OCI-LY7 (cell line): ENCODE measurements at regions of chr4 and their contacts with region 1.

Region 1: GRCh38 chr4:37686373-37687193 is at the start of gene RELL1:
- DNase-seq: peak; percentile 97
- H3K4me3 ChIP-seq: peak within 1 kb of the TSS; percentile 78
- H3K27ac ChIP-seq: peak within 1 kb of the TSS; percentile 75
- H3K4me1 ChIP-seq: peaks cover 40% of the 10 kb centered on the region
- CTCF ChIP-seq: no peak
- total RNA-seq, gene RELL1: 60.7 and 62.3 TPM in 2 replicates

Region 2: GRCh38 chr4:37603070-37603468 is 83.5 kb before region 1 on chr4:
- CTCF ChIA-PET with region 1: no interaction called
- POLR2A ChIA-PET with region 1: no interaction called
- intact Hi-C with region 1: loop called (anchors 1 kb)
- DNase-seq: peak; percentile 60
- H3K4me3 ChIP-seq: no peak overlapping the region
- H3K27ac ChIP-seq: no peak overlapping the region
- H3K4me1 ChIP-seq: no peaks in the 10 kb centered on the region
- CTCF ChIP-seq: peak; percentile 99

Region 3: GRCh38 chr4:37675587-37676290 is 10.8 kb before region 1 on chr4:
- CTCF ChIA-PET with region 1: no interaction called
- POLR2A ChIA-PET with region 1: interaction called, 7 read pairs
- intact Hi-C with region 1: loop called (anchors 1 kb)
- DNase-seq: peak; percentile 95
- H3K4me3 ChIP-seq: peak overlapping the region; percentile 53
- H3K27ac ChIP-seq: peak overlapping the region; percentile 94
- H3K4me1 ChIP-seq: peaks cover 74% of the 10 kb centered on the region
- CTCF ChIP-seq: no peak

Region 4: GRCh38 chr4:37749398-37749988 is 62.9 kb after region 1 on chr4:
- CTCF ChIA-PET with region 1: no interaction called
- POLR2A ChIA-PET with region 1: interaction called, 4 read pairs
- intact Hi-C with region 1: loop called (anchors 2 kb)
- DNase-seq: peak; percentile 48
- H3K4me3 ChIP-seq: no peak overlapping the region
- H3K27ac ChIP-seq: peak overlapping the region; percentile 27
- H3K4me1 ChIP-seq: peaks cover 24% of the 10 kb centered on the region
- CTCF ChIP-seq: no peak

Region 5: GRCh38 chr4:37760840-37761239 is 74.3 kb after region 1 on chr4:
- CTCF ChIA-PET with region 1: no interaction called
- POLR2A ChIA-PET with region 1: no interaction called
- intact Hi-C with region 1: no loop called
- DNase-seq: no peak
- H3K4me3 ChIP-seq: no peak overlapping the region
- H3K27ac ChIP-seq: no peak overlapping the region
- H3K4me1 ChIP-seq: peaks cover 12% of the 10 kb centered on the region
- CTCF ChIP-seq: no peak

Region 6: DNA sequence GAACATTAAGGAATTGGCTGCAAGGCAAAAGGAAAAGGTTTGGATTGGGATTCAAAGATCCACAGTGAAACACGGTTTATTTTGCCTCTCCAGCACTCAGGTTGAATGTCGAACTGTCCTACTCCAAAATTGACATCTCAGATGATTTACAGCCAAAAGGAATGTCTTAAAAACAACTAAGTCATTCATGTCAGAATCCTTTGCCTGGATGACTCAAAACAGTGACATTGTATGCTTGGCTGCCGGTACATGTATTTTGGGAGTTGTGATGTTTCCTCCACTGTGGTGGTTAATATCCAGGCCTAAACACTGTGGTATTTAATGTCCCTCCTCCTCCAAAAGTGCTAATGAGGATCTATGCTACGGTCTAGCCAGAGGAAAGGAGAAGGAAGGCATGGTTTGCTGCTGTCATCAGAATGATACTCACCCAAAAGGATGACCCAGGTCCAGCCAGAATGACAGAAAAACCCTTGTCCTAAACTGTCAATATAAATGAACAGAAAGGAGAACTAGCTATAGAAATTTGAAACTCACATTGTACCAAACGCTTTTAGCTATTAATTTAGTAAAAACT is 160.8 kb after region 1 on chr4:
- CTCF ChIA-PET with region 1: no interaction called
- POLR2A ChIA-PET with region 1: interaction called, 5 read pairs
- intact Hi-C with region 1: loop called (anchors 5 kb)
- DNase-seq: no peak
- H3K4me3 ChIP-seq: peak overlapping the region; percentile 36
- H3K27ac ChIP-seq: peak overlapping the region; percentile 93
- H3K4me1 ChIP-seq: peaks cover 76% of the 10 kb centered on the region
- CTCF ChIP-seq: no peak